Activated B cell treated with CpG ODN at 0.5 μM for 24 hours (primary cell): ENCODE measurements at regions of chrX and their contacts with region 1.

Region 1: DNA sequence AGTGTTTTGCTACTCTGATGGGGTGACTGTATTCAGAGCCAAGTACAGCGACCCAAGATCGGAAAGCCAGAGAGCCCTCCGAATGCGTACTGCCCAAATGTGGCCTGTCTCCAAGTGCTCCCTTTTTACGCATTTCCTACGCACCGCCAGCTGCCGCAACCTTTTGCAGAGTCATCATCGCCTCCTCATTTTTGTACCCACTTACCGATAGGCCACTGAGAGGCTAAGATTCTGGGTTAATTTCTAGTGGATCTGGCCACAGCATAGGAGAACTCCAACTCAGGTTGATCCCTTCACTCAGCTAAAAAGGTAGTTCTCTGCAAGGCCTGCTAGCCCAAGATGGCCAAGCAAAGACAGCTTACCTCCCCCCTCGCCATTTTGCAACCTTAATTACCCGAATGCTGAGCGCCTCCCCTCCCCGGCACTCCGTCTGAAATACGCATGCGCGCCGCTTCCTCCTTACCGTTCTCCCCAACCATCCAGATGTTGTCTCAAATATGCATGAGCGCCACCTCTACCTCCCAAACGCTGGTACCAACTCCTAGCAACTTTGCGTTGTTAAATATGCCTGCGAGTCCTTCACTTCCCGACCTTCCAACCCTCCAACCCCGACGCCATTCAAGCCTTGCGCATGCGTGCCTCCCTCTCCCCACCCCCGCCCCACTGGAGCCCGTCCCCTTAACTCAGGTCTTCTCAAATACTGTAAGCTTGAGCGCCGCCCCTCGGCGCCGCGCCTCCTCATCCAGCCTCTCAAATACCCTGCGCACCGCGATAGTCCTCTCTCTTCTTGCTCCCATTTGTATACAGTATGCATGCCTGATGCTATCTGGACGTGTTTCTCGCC is 11.8 kb upstream of the ZCCHC13 start:
- DNase-seq: peak; percentile 57
- ATAC-seq: peak; percentile 87
- H3K4me3 Mint-ChIP-seq: peak overlapping the region; percentile 98
- H3K27ac Mint-ChIP-seq: peak overlapping the region; percentile 97
- H3K4me1 Mint-ChIP-seq: peaks cover 13% of the 10 kb centered on the region
- H3K27me3 Mint-ChIP-seq: no peaks in the 10 kb centered on the region
- CTCF ChIP-seq: no peak

Region 2: DNA sequence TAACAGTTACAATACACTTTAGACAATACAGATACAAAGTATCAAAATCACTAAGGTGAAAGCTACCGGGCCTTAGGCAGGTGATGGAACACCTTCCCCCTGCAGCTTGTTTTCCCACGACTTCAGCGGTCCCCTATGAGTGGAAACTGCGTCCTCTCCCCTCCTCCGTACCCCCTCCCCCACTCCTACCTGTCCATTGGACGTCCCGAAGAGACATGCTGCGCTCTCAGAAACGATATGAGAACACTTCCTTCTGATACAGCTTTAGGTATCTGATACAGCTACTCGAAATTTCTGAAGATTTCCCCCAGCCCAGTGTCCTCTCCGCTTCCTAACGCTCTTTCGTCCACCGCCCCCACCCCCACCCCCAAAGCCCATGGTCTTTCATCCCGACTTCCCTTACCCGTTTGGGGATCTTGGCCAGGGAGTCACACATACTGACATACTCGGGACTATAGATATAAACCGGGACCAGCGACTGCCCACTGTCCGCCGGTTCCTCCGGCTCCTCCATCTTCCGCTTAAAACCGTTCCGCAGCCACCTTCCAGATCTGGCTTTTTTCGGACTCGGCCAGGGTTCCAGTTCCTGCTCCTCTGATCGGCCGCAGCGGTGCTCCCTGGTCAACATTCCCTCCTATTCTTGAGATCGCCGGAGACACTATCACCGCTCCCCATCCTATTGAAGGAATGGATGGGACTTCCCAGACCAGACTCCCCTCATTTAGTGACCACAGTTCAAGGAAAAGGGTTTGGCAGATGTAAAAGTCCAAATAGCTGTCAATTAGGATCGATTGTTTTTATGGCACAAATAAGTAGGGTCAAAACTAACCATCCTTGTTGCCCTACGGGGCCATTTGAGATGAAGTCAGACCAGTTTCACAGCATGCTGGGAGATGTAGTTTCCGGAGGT is 1719.7 kb before region 1 on chrX and contains the start of gene HDAC8:
- CTCF ChIA-PET with region 1: no interaction called
- POLR2A ChIA-PET with region 1: no interaction called
- intact Hi-C with region 1: loop called (anchors 2 kb)
- DNase-seq: peak; percentile 16
- ATAC-seq: peak; percentile 84
- H3K4me3 Mint-ChIP-seq: peak within 1 kb of the TSS; percentile 98
- H3K27ac Mint-ChIP-seq: peak within 1 kb of the TSS; percentile 84
- H3K4me1 Mint-ChIP-seq: peaks cover 7% of the 10 kb centered on the region
- H3K27me3 Mint-ChIP-seq: peaks cover 4% of the 10 kb centered on the region
- CTCF ChIP-seq: no peak
- total RNA-seq, gene HDAC8: 29.0 and 39.6 TPM in 2 replicates

Region 3: GRCh38 chrX:73943693-73944562 is 348.3 kb before region 1 on chrX:
- CTCF ChIA-PET with region 1: no interaction called
- POLR2A ChIA-PET with region 1: interaction called, 3 read pairs
- intact Hi-C with region 1: loop called (anchors 1 kb)
- DNase-seq: peak; percentile 68
- ATAC-seq: peak; percentile 99
- H3K4me3 Mint-ChIP-seq: peak overlapping the region; percentile 95
- H3K27ac Mint-ChIP-seq: peak overlapping the region; percentile 94
- H3K4me1 Mint-ChIP-seq: peaks cover 21% of the 10 kb centered on the region
- H3K27me3 Mint-ChIP-seq: no peaks in the 10 kb centered on the region
- CTCF ChIP-seq: no peak

Region 4: GRCh38 chrX:74343343-74344279 is 51.4 kb after region 1 on chrX:
- CTCF ChIA-PET with region 1: no interaction called
- POLR2A ChIA-PET with region 1: no interaction called
- intact Hi-C with region 1: loop called (anchors 5 kb)
- DNase-seq: no peak
- ATAC-seq: peak; percentile 70
- H3K4me3 Mint-ChIP-seq: no peak overlapping the region
- H3K27ac Mint-ChIP-seq: no peak overlapping the region
- H3K4me1 Mint-ChIP-seq: peaks cover 12% of the 10 kb centered on the region
- H3K27me3 Mint-ChIP-seq: peaks cover 3% of the 10 kb centered on the region
- CTCF ChIP-seq: no peak

Region 5: GRCh38 chrX:74506317-74507115 is 214.3 kb after region 1 on chrX:
- CTCF ChIA-PET with region 1: no interaction called
- POLR2A ChIA-PET with region 1: no interaction called
- intact Hi-C with region 1: loop called (anchors 5 kb)
- DNase-seq: peak; percentile 18
- ATAC-seq: peak; percentile 99
- H3K4me3 Mint-ChIP-seq: peak overlapping the region; percentile 17
- H3K27ac Mint-ChIP-seq: peak overlapping the region; percentile 69
- H3K4me1 Mint-ChIP-seq: peaks cover 24% of the 10 kb centered on the region
- H3K27me3 Mint-ChIP-seq: no peaks in the 10 kb centered on the region
- CTCF ChIP-seq: no peak

Region 6: GRCh38 chrX:74550295-74550802 is 258.2 kb after region 1 on chrX:
- CTCF ChIA-PET with region 1: no interaction called
- POLR2A ChIA-PET with region 1: no interaction called
- intact Hi-C with region 1: loop called (anchors 5 kb)
- DNase-seq: peak; percentile 71
- ATAC-seq: peak; percentile 95
- H3K4me3 Mint-ChIP-seq: peak overlapping the region; percentile 64
- H3K27ac Mint-ChIP-seq: peak overlapping the region; percentile 56
- H3K4me1 Mint-ChIP-seq: peaks cover 3% of the 10 kb centered on the region
- H3K27me3 Mint-ChIP-seq: no peaks in the 10 kb centered on the region
- CTCF ChIP-seq: peak; percentile 60

Region 7: DNA sequence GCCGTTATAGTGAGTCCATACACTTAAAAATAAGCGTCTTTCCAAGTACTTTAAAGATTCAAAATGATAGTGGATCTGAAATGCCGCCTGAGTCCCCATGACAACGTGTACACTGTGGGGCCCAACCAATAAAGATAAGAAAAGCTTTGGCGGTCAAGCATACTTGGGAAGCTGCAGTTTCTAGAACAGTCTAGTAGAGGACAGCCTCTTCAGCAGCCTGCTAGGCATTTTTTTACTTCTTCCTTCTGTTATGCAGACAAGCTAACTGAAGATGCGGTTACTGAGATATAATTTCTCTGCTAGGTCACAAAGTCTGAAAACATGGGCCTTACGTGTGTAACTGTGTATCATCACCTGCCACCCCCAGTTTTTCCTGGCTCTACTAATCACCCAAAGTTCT is 981.3 kb after region 1 on chrX:
- CTCF ChIA-PET with region 1: no interaction called
- POLR2A ChIA-PET with region 1: no interaction called
- intact Hi-C with region 1: loop called (anchors 5 kb)
- DNase-seq: no peak
- ATAC-seq: peak; percentile 2
- H3K4me3 Mint-ChIP-seq: peak overlapping the region; percentile 97
- H3K27ac Mint-ChIP-seq: peak overlapping the region; percentile 93
- H3K4me1 Mint-ChIP-seq: peaks cover 47% of the 10 kb centered on the region
- H3K27me3 Mint-ChIP-seq: no peaks in the 10 kb centered on the region
- CTCF ChIP-seq: no peak